ENCODE measurements at regions of chr4 and their contacts with region 1.

Region 1: GRCh38 chr4:53281438-53281837 is 84.4 kb downstream of the SCFD2 start:
- DNase-seq: no peak
- H3K4me3 ChIP-seq: no peak overlapping the region
- H3K27ac ChIP-seq: no peak overlapping the region
- H3K4me1 ChIP-seq: no peaks in the 10 kb centered on the region
- H3K27me3 ChIP-seq: no peaks in the 10 kb centered on the region
- CTCF ChIP-seq: no peak
- POLR2A ChIP-seq: no peak

Region 2: GRCh38 chr4:52987392-52988056 is 293.9 kb before region 1 on chr4:
- intact Hi-C with region 1: no loop called
- DNase-seq: no peak
- H3K4me3 ChIP-seq: no peak overlapping the region
- H3K27ac ChIP-seq: no peak overlapping the region
- H3K4me1 ChIP-seq: peaks cover 14% of the 10 kb centered on the region
- H3K27me3 ChIP-seq: no peaks in the 10 kb centered on the region
- CTCF ChIP-seq: no peak
- POLR2A ChIP-seq: no peak

Region 3: DNA sequence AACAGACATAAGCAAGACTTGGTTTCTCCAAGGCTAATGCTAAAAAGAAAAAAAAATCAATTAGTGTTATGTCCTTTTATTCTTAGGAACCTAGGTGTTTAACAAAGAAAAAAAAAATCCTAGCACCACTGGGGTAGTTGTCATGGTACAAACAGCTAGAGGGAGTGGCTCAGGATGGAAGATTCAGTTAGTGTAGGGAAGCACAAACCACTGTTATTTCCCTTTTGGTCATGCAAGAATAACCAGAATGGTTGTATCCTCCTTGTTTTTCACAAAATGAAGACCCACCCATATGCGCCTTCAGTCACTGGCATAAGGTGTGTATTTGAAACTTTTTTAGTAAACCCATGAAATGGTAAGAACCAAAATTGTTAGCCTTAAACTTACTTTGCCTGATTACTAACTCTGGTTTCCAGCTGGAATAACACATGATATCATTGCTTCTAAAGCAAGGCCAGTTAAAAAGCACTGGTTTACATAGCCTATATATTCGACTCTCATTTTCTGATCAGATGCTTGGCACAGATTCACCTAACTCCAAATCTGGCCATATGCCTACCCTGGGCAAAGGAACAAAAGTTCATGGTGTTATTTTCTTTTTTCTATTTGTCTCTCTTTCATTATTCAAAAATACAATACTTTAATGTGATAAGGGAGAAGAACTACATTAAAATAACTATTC is 48.2 kb before region 1 on chr4:
- intact Hi-C with region 1: loop called (anchors 10 kb)
- DNase-seq: no peak
- H3K4me3 ChIP-seq: no peak overlapping the region
- H3K27ac ChIP-seq: no peak overlapping the region
- H3K4me1 ChIP-seq: no peaks in the 10 kb centered on the region
- H3K27me3 ChIP-seq: no peaks in the 10 kb centered on the region
- CTCF ChIP-seq: no peak
- POLR2A ChIP-seq: no peak

Measured in vagina (tissue), 2 donors.